Heart left ventricle (tissue), 16 donors: ENCODE measurements at regions of chr1 and their contacts with region 1.

Region 1: GRCh38 chr1:155172732-155173477 is at the start of gene KRTCAP2:
- DNase-seq: peak; percentile 95 to 98 (median 97)
- ATAC-seq: peak; percentile 79 to 92 (median 90)
- H3K4me3 ChIP-seq: peak within 1 kb of the TSS; percentile 48 to 98 (median 82)
- H3K27ac ChIP-seq: peak within 1 kb of the TSS; percentile 83 to 98 (median 94)
- H3K4me1 ChIP-seq: peaks cover 0 to 50% (median 21%) of the 10 kb centered on the region in 12 donors
- H3K27me3 ChIP-seq: peaks cover 0 to 28% (median 14%) of the 10 kb centered on the region in 9 donors
- CTCF ChIP-seq: peak; percentile 86 to 97 (median 93)
- POLR2A ChIP-seq: peak in 1 of 2 donors; percentile 74
- total RNA-seq, gene KRTCAP2: 106 to 199 (median 123) TPM

Region 2: GRCh38 chr1:155135415-155136028 is 37.4 kb before region 1 on chr1 and contains the start of gene SLC50A1:
- intact Hi-C with region 1: loop called in 1 of 10 experiments (anchors 5 kb)
- DNase-seq: peak; percentile 95 to 97 (median 96)
- ATAC-seq: peak; percentile 91 to 93 (median 92)
- H3K4me3 ChIP-seq: peak within 1 kb of the TSS; percentile 47 to 86 (median 60)
- H3K27ac ChIP-seq: peak within 1 kb of the TSS; percentile 90 to 99 (median 98)
- H3K4me1 ChIP-seq: peaks cover 21 to 86% (median 67%) of the 10 kb centered on the region in 12 donors
- H3K27me3 ChIP-seq: no peaks in the 10 kb centered on the region
- CTCF ChIP-seq: peak in 8 of 12 donors; percentile 17 to 55 (median 35)
- POLR2A ChIP-seq: peak; percentile 56 to 91
- total RNA-seq, gene SLC50A1: 5.4 to 21.7 (median 9.7) TPM

Region 3: GRCh38 chr1:155193275-155193990 is 20.5 kb after region 1 on chr1:
- intact Hi-C with region 1: loop called in 1 of 10 experiments (anchors 2 kb)
- DNase-seq: peak; percentile 84 to 94 (median 87)
- ATAC-seq: peak; percentile 83 to 91 (median 87)
- H3K4me3 ChIP-seq: peak overlapping the region in 11 of 12 donors; percentile 28 to 70 (median 59)
- H3K27ac ChIP-seq: peak overlapping the region; percentile 23 to 95 (median 81)
- H3K4me1 ChIP-seq: peaks cover 0 to 33% (median 24%) of the 10 kb centered on the region in 12 donors
- H3K27me3 ChIP-seq: no peaks in the 10 kb centered on the region
- CTCF ChIP-seq: peak in 11 of 12 donors; percentile 92 to 100 (median 97)
- POLR2A ChIP-seq: peak in 1 of 2 donors; percentile 43

Region 4: GRCh38 chr1:155227261-155228095 is 54.6 kb after region 1 on chr1:
- intact Hi-C with region 1: loop called in 9 of 10 experiments (anchors 2 to 10 kb)
- DNase-seq: peak; percentile 98 to 99 (median 99)
- ATAC-seq: peak; percentile 99
- H3K4me3 ChIP-seq: peak overlapping the region; percentile 22 to 77 (median 62)
- H3K27ac ChIP-seq: peak overlapping the region; percentile 42 to 96 (median 88)
- H3K4me1 ChIP-seq: peaks cover 0 to 54% (median 17%) of the 10 kb centered on the region in 12 donors
- H3K27me3 ChIP-seq: no peaks in the 10 kb centered on the region
- CTCF ChIP-seq: no peak
- POLR2A ChIP-seq: peak in 1 of 2 donors; percentile 81